ENCODE measurements at regions of chr12 and their contacts with region 1.

Region 1: GRCh38 chr12:53005986-53006809 is at the start of gene EIF4B:
- DNase-seq: peak; percentile 96 to 100
- ATAC-seq: peak; percentile 94 to 95
- H3K4me3 ChIP-seq: peak within 1 kb of the TSS; percentile 88
- H3K27ac ChIP-seq: peak within 1 kb of the TSS; percentile 95 to 99
- H3K4me1 ChIP-seq: peaks cover 47% of the 10 kb centered on the region
- CTCF ChIP-seq: no peak
- EP300 ChIP-seq: peak in 1 of 2 experiments; percentile 3; a peak in 1 of 5 replicates
- POLR2A ChIP-seq: peak; percentile 63
- RAD21 ChIP-seq: no peak
- polyA plus RNA-seq, gene EIF4B: 577 and 650 TPM in 2 replicates

Region 2: DNA sequence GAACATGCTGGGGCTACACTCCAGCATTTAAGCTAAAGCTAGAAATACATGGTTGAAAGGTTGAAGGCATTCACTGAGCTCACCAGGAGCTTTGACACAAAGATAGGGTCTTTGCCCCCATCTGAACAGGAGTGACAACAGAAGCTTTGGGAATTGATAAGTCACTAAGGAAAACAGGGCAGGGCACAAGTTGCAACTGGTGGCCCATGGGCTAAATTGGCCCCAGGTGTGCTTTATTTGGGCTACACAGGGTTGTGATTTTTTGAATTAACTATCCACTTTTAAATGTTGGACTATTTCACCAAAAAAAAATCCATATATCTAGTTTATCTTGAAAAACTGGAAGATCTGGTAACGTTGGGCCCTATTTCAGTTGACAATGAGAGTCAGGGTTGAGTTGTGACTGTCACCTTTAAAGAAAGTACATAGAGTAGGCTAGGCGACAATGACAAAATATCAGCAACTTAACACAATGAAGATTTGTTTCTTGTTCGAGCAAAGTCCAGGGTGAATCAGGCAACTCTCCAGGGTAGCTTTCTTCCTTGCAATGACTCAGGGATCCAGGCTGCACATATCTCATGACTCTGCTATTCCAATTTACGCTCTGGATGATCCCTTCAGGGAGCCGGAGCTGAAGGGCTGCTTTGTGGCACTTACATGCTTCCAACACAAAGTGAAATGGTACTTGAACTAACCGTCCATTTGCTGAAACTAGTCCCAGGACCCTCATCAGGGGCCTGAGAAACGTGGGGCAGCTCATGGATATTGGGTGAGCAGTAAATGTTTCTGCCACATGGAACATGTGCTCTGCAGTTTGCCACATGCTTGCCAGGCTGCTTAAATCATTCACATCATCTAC is 13.3 kb before region 1 on chr12:
- CTCF ChIA-PET with region 1: interaction called, 5 read pairs
- POLR2A ChIA-PET with region 1: interaction called, 44 read pairs
- DNase-seq: peak; percentile 86 to 92
- ATAC-seq: peak; percentile 94 to 98
- H3K4me3 ChIP-seq: no peak overlapping the region
- H3K27ac ChIP-seq: peak overlapping the region; percentile 89 to 93
- H3K4me1 ChIP-seq: peaks cover 50% of the 10 kb centered on the region
- CTCF ChIP-seq: no peak
- EP300 ChIP-seq: no peak
- POLR2A ChIP-seq: no peak
- RAD21 ChIP-seq: no peak

Region 3: DNA sequence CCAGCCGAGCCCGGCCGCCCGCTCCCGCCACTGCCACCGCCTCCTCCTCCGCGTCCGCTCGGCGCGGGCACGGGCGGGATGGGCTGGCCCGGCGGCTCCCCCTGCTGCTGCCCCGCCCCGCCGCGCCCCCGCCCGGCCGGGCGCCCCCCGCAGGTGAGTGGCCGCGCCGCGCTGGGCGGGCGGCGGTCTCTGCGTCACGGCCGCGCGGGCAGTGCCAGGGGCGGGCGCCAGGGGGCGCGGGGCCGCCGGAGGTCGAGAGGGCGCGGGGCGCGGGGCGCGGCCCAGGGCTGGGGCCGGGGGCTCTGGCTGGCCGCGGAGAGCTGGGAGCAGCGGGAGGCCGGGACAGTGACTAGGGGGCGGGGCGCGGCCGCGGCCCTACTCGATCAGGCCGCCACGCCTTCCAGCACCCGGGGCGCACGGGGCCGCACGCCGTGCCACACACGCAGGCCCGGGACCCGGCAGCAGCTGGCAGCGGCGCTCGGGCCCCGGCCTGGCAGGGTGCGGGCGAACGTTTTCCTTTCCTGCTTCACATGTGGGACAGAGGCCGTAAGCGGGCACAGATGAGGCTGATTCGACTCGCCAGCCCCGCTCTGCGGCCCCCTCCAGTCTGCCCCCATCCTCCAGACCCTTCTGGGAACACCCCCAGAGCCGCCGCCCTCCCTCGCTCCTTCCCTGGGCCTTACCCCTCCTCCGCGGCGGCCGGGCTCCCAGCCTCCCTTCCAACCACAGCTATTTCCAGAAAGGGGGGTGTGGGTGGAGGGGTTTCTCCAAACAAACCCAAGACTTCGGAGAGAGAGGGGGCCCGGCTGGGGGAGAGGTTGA is 41.2 kb after region 1 on chr12:
- CTCF ChIA-PET with region 1: interaction called, 6 read pairs
- POLR2A ChIA-PET with region 1: interaction called, 27 read pairs
- DNase-seq: peak; percentile 67 to 83
- ATAC-seq: peak; percentile 36 to 37
- H3K4me3 ChIP-seq: peak overlapping the region; percentile 54
- H3K27ac ChIP-seq: peak overlapping the region; percentile 99
- H3K4me1 ChIP-seq: peaks cover 74% of the 10 kb centered on the region
- CTCF ChIP-seq: peak; percentile 71
- EP300 ChIP-seq: no peak
- POLR2A ChIP-seq: peak; percentile 38
- RAD21 ChIP-seq: no peak

Region 4: DNA sequence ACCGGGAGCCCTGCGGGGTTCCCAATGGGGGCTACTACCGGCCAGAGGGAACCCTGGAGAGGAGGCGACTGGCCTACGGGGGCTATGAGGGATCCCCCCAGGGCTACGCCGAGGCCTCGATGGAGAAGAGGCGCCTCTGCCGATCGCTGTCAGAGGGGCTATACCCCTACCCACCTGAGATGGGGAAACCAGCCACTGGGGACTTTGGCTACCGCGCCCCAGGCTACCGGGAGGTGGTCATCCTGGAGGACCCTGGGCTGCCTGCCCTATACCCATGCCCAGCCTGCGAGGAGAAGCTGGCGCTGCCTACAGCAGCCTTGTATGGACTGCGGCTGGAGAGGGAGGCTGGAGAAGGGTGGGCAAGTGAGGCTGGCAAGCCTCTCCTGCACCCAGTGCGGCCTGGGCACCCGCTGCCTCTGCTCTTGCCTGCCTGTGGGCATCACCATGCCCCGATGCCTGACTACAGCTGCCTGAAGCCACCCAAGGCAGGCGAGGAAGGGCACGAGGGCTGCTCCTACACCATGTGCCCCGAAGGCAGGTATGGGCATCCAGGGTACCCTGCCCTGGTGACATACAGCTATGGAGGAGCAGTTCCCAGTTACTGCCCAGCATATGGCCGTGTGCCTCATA is 53.4 kb after region 1 on chr12:
- CTCF ChIA-PET with region 1: no interaction called
- POLR2A ChIA-PET with region 1: no interaction called
- DNase-seq: no peak
- ATAC-seq: 0 out of 6 replicates have a peak, but pooled peaks of 1 of the 2 experiments have one; percentile 2
- H3K4me3 ChIP-seq: no peak overlapping the region
- H3K27ac ChIP-seq: no peak overlapping the region
- H3K4me1 ChIP-seq: peaks cover 37% of the 10 kb centered on the region
- CTCF ChIP-seq: no peak
- EP300 ChIP-seq: no peak
- POLR2A ChIP-seq: no peak
- RAD21 ChIP-seq: no peak

Region 5: DNA sequence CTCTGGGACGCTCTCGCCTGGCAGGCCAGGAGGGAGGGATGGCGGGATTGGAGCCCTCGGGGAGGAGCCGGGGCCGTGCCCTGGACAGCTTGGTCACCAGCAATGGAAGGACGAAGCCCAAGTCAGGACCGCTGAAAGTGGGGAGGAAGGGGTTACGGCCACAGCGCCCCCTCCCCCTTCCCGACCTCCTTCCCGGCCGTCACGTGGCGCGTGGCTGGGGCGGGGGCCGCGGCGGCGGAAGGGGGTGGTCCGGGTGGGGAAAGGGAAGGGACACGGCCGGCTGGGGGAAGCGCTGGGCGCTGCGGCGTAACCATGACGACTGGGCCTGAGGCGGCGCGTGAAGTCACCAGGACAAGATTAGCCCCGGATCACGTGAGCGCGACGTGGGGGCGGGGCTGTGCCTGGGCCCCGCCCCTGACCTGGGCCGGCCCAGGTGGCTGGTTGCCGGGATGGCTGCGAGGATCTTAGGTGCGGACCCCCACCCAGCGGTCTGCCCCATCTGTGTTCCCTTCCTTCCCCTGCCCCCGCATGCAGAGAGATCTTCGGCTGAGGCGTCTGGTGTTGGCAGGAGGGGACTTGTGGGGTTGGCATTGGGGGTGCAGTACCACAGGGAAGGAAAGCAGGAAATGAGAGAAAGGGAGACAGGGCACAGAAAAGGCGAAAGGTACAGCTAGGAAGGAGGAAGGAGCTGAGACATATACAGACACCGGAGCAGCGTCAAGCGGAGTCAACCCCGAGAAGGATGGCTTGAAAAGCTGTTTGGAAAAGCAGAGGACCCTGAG is 486.8 kb after region 1 on chr12:
- CTCF ChIA-PET with region 1: no interaction called
- POLR2A ChIA-PET with region 1: no interaction called
- DNase-seq: peak; percentile 72 to 92
- ATAC-seq: peak; percentile 80 to 84
- H3K4me3 ChIP-seq: peak overlapping the region; percentile 60
- H3K27ac ChIP-seq: peak overlapping the region; percentile 89 to 91
- H3K4me1 ChIP-seq: peaks cover 48% of the 10 kb centered on the region
- CTCF ChIP-seq: no peak
- EP300 ChIP-seq: no peak
- POLR2A ChIP-seq: peak; percentile 85
- RAD21 ChIP-seq: no peak; a peak in 1 of 5 replicates

Measured in A549 (cell line).